ENCODE measurements at regions of chr4 and their contacts with region 1.

Region 1: GRCh38 chr4:103019308-103020124 is at the start of gene SLC9B1:
- DNase-seq: peak; percentile 98
- H3K4me3 Mint-ChIP-seq: peak within 1 kb of the TSS; percentile 93
- H3K27ac Mint-ChIP-seq: peak within 1 kb of the TSS; percentile 94
- H3K4me1 Mint-ChIP-seq: peaks cover 22% of the 10 kb centered on the region
- H3K27me3 Mint-ChIP-seq: no peaks in the 10 kb centered on the region
- total RNA-seq, gene SLC9B1: 0.23 and 0.47 TPM in 2 replicates

Region 2: DNA sequence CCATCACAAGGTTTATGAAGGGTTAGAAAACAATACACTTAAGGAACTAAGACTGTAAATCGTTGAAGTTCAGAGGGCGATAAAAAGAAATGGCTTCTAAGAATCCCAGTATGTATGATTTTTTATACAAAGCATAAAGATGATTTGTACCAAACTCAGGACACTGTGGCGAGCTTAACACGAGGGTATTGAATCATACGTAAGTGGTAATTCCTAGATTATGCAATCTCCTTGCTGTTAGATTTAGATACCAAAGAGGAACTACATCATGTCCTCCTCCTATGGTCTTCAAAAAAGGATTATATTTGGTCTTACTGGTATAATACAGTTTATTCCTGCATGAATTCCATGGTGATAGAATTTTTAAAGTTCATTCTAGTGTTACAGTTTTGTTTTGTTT is 494.4 kb before region 1 on chr4:
- intact Hi-C with region 1: no loop called
- DNase-seq: no peak
- H3K4me3 Mint-ChIP-seq: peak overlapping the region; percentile 44
- H3K27ac Mint-ChIP-seq: peak overlapping the region; percentile 42
- H3K4me1 Mint-ChIP-seq: peaks cover 78% of the 10 kb centered on the region
- H3K27me3 Mint-ChIP-seq: no peaks in the 10 kb centered on the region

Region 3: GRCh38 chr4:102868781-102869568 is 150.5 kb before region 1 on chr4 and contains the start of gene CISD2:
- intact Hi-C with region 1: loop called (anchors 1 kb)
- DNase-seq: peak; percentile 98
- H3K4me3 Mint-ChIP-seq: peak within 1 kb of the TSS; percentile 93
- H3K27ac Mint-ChIP-seq: peak within 1 kb of the TSS; percentile 99
- H3K4me1 Mint-ChIP-seq: peaks cover 56% of the 10 kb centered on the region
- H3K27me3 Mint-ChIP-seq: no peaks in the 10 kb centered on the region
- total RNA-seq, gene CISD2: 43.9 and 48.5 TPM in 2 replicates

Region 4: DNA sequence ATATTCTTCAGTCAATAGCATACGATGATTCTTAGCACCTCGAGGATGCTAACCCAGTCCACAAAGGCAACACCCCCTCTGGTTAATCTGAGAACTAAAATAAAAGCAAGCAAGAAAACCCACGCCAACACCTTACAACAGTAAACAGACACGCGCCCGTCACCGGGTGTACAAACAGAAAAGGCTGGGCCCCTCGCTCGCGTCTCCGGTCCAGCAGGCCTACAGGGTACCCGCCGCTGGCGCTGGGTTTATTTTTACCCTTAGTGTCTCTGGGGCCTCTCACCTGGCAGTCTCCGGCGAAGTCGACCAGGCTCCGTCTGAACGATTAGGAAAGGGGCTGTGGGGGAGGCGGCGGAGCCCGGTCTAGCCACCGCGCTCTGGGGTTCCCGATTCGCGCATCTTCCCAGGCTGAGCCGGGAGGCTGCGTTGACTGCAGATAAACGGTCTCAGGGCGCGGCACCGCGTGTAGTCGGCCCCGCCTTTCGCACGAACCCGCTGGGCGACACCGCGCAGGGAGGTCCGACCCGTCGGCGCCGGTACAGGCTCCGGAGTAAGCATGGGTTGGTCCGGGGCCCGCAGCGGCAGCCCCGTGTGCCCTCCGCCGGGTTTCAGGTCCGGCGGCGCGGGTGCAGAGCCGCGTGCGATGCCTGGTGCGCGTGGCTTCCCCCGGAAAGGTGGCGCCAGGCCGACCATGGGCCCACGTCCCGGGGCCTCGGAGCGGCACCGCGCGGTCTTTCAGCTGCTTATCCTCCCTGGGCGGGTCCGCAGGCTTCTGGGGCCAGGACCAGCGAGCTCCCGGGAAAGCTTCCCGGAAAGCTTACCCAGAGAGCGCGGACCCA is 56.6 kb after region 1 on chr4:
- intact Hi-C with region 1: loop called (anchors 1 kb)
- DNase-seq: peak; percentile 90
- H3K4me3 Mint-ChIP-seq: peak overlapping the region; percentile 88
- H3K27ac Mint-ChIP-seq: peak overlapping the region; percentile 96
- H3K4me1 Mint-ChIP-seq: peaks cover 37% of the 10 kb centered on the region
- H3K27me3 Mint-ChIP-seq: no peaks in the 10 kb centered on the region

Measured in activated CD4-positive, alpha-beta T cell treated with anti-CD3 and anti-CD28 coated beads, Interleukin-2, amount 10 ng/mL, durations not matched to agents 24 days and 14 days (primary cell).